ENCODE measurements at regions of chr10 and their contacts with region 1.

Region 1: GRCh38 chr10:68752711-68753350 is 31.8 kb downstream of the CCAR1 start:
- DNase-seq: no peak
- H3K4me3 ChIP-seq: no peak overlapping the region
- H3K27ac ChIP-seq: peak overlapping the region; percentile 52
- H3K4me1 ChIP-seq: peaks cover 11% of the 10 kb centered on the region
- CTCF ChIP-seq: no peak

Region 2: DNA sequence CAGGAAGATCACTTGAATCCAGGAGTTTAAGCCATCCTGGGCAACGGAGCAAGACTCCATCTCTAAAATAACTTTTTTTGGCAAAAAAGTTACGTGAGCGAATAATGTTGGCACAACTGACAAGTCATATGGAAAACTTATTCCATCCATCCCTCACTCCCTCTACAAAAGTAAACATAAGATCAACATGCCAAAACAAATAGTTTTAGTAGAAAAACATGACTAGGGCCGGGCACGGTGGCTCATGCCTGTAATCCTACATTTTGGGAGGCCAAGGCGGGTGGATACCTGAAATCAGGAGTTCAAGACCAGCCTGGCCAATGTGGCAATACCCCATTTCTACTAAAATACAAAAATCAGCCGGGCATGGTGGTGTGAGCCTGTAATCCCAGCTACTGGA is 251.1 kb before region 1 on chr10:
- CTCF ChIA-PET with region 1: no interaction called
- POLR2A ChIA-PET with region 1: no interaction called
- intact Hi-C with region 1: no loop called
- DNase-seq: no peak
- H3K4me3 ChIP-seq: no peak overlapping the region
- H3K27ac ChIP-seq: no peak overlapping the region
- H3K4me1 ChIP-seq: no peaks in the 10 kb centered on the region
- CTCF ChIP-seq: no peak

Region 3: DNA sequence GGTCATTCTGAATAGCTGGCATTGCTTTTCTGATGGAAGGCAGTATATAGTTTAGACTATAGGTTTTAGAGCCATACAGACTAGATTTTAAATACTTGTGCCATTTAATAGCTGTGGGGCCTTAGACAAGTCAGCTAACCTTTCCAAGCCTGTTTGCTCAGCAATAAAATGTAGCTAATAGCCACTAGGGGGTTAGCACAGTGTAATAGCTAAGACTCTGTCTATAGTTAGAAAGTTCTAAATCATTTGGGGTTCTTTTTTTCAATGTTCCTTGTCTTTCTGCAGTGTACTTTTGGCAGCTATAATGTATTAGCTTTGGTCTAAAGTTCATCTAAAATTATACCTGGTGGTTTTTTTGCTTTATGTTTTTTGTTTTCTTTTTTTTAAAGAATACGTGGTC is 228.2 kb after region 1 on chr10:
- CTCF ChIA-PET with region 1: no interaction called
- POLR2A ChIA-PET with region 1: interaction called, 3 read pairs
- intact Hi-C with region 1: loop called (anchors 5 kb)
- DNase-seq: peak; percentile 19
- H3K4me3 ChIP-seq: no peak overlapping the region
- H3K27ac ChIP-seq: no peak overlapping the region
- H3K4me1 ChIP-seq: no peaks in the 10 kb centered on the region
- CTCF ChIP-seq: peak; percentile 62